OCI-LY7 (cell line): ENCODE measurements at regions of chr1 and their contacts with region 1.

Region 1: GRCh38 chr1:44835738-44836675 is 7.0 kb downstream of the PTCH2 start:
- DNase-seq: peak; percentile 77
- H3K4me3 ChIP-seq: no peak overlapping the region
- H3K27ac ChIP-seq: no peak overlapping the region
- H3K4me1 ChIP-seq: no peaks in the 10 kb centered on the region
- CTCF ChIP-seq: peak; percentile 94

Region 2: DNA sequence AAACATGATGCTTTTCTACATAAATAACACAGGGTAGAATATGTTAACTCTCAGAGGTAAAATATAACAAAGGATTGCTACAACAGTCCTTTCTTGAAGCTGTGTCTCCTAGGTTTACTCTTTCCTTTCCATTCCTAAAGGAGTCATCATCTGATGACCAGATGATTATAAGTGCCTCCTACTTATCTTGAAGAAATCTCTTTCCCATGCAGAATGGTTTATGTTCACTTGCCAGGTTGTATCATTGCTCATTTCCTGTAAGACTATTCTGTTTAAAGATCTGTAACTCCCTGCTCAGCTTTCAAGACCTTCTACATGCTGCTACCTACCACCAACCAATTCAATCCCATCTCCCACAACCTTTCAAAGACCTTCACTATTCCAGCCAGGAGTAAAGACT is 58.6 kb after region 1 on chr1:
- CTCF ChIA-PET with region 1: no interaction called
- POLR2A ChIA-PET with region 1: no interaction called
- intact Hi-C with region 1: no loop called
- DNase-seq: no peak
- H3K4me3 ChIP-seq: no peak overlapping the region
- H3K27ac ChIP-seq: no peak overlapping the region
- H3K4me1 ChIP-seq: no peaks in the 10 kb centered on the region
- CTCF ChIP-seq: no peak

Region 3: GRCh38 chr1:44985747-44986359 is 149.8 kb after region 1 on chr1:
- CTCF ChIA-PET with region 1: no interaction called
- POLR2A ChIA-PET with region 1: no interaction called
- intact Hi-C with region 1: loop called (anchors 10 kb)
- DNase-seq: no peak
- H3K4me3 ChIP-seq: peak overlapping the region; percentile 93
- H3K27ac ChIP-seq: peak overlapping the region; percentile 39
- H3K4me1 ChIP-seq: peaks cover 11% of the 10 kb centered on the region
- CTCF ChIP-seq: no peak